ENCODE measurements at regions of chr17 and their contacts with region 1.

Region 1: DNA sequence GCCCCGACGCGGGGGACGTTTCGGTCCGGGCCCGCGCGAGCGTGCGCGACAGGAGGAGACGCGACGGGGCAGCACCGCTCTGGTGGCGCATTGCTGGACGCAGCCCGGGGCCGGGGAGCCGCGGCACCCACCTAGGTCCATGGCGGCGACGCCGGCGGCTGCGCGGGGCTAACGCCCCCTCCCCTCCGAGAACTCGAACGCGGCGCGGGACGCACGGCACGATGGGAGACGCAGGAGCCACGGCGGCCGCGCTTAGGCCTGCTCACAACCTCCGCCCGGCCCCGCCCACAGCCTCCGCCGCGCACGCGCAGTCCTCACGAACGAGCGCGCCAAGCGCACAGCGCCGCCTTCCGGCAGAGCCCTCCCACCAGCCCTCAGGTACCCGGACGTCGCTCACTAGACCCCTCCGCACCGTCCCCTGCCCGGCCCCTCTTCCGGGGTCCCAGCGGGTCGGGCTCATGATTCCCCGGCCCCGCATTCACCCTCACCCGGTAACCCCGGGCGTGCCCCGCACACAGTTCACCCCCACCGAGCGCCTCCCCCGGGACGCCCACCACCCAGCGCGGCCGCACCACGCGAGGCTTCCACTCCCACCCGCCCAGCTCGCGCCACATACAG is at the start of gene GEMIN4:
- DNase-seq: peak; percentile 86 to 100
- H3K4me3 ChIP-seq: peak within 1 kb of the TSS; percentile 70 to 88 (median 84)
- H3K27ac ChIP-seq: peak within 1 kb of the TSS; percentile 68; the same call in 1 of the 2 replicates
- H3K4me1 ChIP-seq: peaks cover 2 to 11% (median 7%) of the 10 kb centered on the region in 4 experiments; a peak in 6 of 7 replicates
- H3K27me3 ChIP-seq: no peaks in the 10 kb centered on the region
- CTCF ChIP-seq: peak; percentile 83 to 95 (median 92)
- EP300 ChIP-seq: no peak
- POLR2A ChIP-seq: peak in 1 of 2 experiments; percentile 83; a peak in 2 of 3 replicates
- RAD21 ChIP-seq: peak; percentile 37 to 48; a peak in 3 of 4 replicates
- total RNA-seq, gene GEMIN4: 51.9 and 55.9 TPM in 2 replicates

Region 2: GRCh38 chr17:640436-640835 is 111.7 kb before region 1 on chr17:
- CTCF ChIA-PET with region 1: no interaction called
- POLR2A ChIA-PET with region 1: no interaction called
- DNase-seq: no peak
- H3K4me3 ChIP-seq: no peak overlapping the region
- H3K27ac ChIP-seq: no peak overlapping the region
- H3K4me1 ChIP-seq: no peaks in the 10 kb centered on the region
- H3K27me3 ChIP-seq: no peaks in the 10 kb centered on the region
- CTCF ChIP-seq: no peak
- EP300 ChIP-seq: no peak
- POLR2A ChIP-seq: no peak
- RAD21 ChIP-seq: no peak

Region 3: DNA sequence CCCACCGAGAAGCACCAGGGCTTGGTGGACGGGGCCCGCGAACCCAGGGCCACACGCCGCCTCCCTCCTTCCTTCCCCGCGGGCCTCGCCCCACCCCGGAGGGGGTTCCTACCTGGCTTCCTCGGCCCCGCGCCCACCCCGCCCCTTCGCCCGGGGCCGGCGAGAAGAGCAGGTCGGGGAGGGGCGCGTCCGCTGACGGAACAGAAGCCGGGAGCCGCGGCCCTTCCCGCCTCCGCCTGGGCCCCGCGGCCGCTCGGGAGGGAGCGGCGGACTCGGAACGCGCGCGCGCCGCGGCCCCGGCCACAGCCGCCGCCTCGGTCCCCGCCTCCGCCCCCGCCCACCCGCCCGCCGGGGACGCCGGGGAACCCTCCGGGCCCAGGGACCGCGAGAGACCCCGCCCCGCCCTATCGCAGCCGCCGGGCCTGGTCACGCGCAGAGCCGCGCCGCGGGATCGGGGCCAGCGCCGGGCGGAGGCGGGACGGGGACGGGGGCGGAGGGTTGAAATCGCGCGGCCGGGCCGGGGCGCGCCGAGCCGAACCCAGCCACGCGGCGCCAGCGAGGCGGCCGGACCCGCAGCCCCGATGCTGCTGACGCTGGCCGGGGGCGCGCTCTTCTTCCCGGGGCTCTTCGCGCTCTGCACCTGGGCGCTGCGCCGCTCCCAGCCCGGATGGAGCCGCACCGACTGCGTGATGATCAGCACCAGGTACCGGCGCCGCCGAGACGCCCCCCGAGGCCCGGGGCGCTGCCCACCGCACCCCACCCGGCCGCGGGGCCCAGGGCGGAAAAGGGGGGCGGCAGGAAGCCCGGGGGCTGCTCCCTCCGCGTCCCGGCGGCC is 19.8 kb before region 1 on chr17 and contains the start of gene TLCD3A:
- CTCF ChIA-PET with region 1: interaction called, 4 read pairs
- POLR2A ChIA-PET with region 1: interaction called, 44 read pairs
- DNase-seq: peak in 1 of 2 experiments; percentile 74
- H3K4me3 ChIP-seq: peak within 1 kb of the TSS; percentile 75 to 99 (median 83)
- H3K27ac ChIP-seq: peak within 1 kb of the TSS; percentile 65; the same call in 1 of the 2 replicates
- H3K4me1 ChIP-seq: peaks cover 0 to 6% (median 5%) of the 10 kb centered on the region in 4 experiments; a peak in 5 of 7 replicates
- H3K27me3 ChIP-seq: no peaks in the 10 kb centered on the region
- CTCF ChIP-seq: no peak
- EP300 ChIP-seq: no peak
- POLR2A ChIP-seq: peak; percentile 29 to 62; a peak in 2 of 3 replicates
- RAD21 ChIP-seq: no peak
- total RNA-seq, gene TLCD3A: 23.8 and 26.1 TPM in 2 replicates

Region 4: GRCh38 chr17:781805-782731 is 30.0 kb after region 1 on chr17 and contains the starts of genes GLOD4 and MRM3:
- CTCF ChIA-PET with region 1: interaction called, 6 read pairs
- POLR2A ChIA-PET with region 1: interaction called, 22 read pairs
- DNase-seq: peak in 1 of 2 experiments; percentile 99
- H3K4me3 ChIP-seq: peak within 1 kb of the TSS; percentile 89 to 100 (median 97)
- H3K27ac ChIP-seq: peak within 1 kb of the TSS; percentile 87
- H3K4me1 ChIP-seq: 0 out of 7 replicates have a peak, but pooled peaks cover 0 to 1% (median 0%) of the 10 kb centered on the region in 4 experiments
- H3K27me3 ChIP-seq: no peaks in the 10 kb centered on the region
- CTCF ChIP-seq: peak in 1 of 3 experiments; percentile 18; a peak in 1 of 4 replicates
- EP300 ChIP-seq: no peak
- POLR2A ChIP-seq: peak; percentile 56 to 97
- RAD21 ChIP-seq: no peak; a peak in 1 of 4 replicates
- total RNA-seq, gene GLOD4: 81.3 and 85.3 TPM in 2 replicates
- total RNA-seq, gene MRM3: 20.8 and 22.3 TPM in 2 replicates

Measured in H1 (cell line).